IMR-90 (cell line): ENCODE measurements at regions of chr7 and their contacts with region 1.

Region 1: DNA sequence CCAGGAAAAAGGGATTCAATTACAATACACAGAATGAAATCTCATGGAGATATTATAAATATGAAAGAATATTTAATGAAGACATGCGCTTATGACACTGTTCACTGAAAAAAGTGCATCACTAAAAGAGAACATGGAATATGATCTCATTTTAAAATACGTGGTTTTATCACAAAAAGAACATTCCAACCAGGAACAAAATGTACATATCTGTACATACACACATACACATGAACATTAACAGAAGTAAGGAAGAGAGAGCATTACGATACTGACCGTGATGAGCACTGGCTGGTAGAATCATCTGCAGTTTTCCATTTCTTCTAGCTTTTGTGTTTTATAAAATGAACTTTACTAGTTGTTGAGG is 39.4 kb downstream of the IGF2BP3 start:
- DNase-seq: no peak
- ATAC-seq: no peak
- H3K4me3 ChIP-seq: no peak overlapping the region
- H3K27ac ChIP-seq: peak overlapping the region; percentile 30; the same call in 1 of the 2 replicates
- H3K4me1 ChIP-seq: peaks cover 13% of the 10 kb centered on the region
- H3K27me3 ChIP-seq: no peaks in the 10 kb centered on the region
- CTCF ChIP-seq: no peak
- POLR2A ChIP-seq: no peak
- RAD21 ChIP-seq: no peak

Region 2: GRCh38 chr7:23418046-23418445 is 12.8 kb before region 1 on chr7:
- CTCF ChIA-PET with region 1: interaction called, 11 read pairs
- POLR2A ChIA-PET with region 1: no interaction called
- dilution Hi-C with region 1: no loop called
- in situ Hi-C with region 1: no loop called
- intact Hi-C with region 1: no loop called
- DNase-seq: peak; percentile 66
- ATAC-seq: peak; percentile 66
- H3K4me3 ChIP-seq: no peak overlapping the region
- H3K27ac ChIP-seq: no peak overlapping the region
- H3K4me1 ChIP-seq: no peaks in the 10 kb centered on the region; the same call in 1 of the 2 replicates
- H3K27me3 ChIP-seq: no peaks in the 10 kb centered on the region
- CTCF ChIP-seq: 0 out of 2 replicates have a peak, but pooled peaks have one; percentile 1
- POLR2A ChIP-seq: no peak
- RAD21 ChIP-seq: no peak

Region 3: DNA sequence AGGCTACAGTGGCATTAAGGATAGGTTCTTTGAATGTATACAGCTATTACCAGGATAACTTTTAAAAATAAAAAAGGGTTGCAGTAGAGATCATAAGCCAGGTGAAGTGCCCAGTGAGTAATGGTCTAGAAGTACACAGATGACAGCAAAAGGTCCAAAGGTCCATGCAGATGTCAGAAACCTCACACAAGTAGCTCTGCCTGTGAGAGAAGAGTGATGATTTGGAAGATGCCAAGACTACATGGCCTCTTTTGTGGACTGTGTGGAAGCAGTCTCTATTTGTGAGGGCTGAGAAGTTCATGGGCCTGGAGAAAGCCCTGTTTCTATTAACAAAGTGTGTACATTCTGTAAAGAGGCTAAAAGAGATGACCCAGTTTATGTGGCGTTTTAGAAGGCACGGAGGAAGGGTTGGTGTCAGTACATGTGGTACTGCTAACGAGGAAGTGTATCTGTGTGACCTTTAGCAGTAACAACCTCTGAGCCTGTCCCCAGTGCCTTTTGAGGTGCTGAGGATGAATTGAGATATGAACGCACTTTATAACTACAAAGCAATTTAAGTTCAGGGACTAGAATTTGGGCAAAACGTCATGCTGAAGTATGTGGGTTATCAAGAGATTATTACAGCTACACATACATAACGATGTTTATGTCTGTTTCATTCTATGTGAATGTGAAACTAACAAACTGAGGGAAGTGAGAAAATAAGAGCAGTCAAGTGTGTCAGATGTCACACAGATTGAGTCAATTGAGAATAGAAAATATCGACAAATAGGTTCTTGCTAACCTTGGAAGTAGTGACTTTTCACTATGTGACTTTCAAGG is 1686.6 kb after region 1 on chr7:
- CTCF ChIA-PET with region 1: interaction called, 10 read pairs
- POLR2A ChIA-PET with region 1: no interaction called
- dilution Hi-C with region 1: no loop called
- in situ Hi-C with region 1: no loop called
- intact Hi-C with region 1: no loop called
- DNase-seq: peak; percentile 27
- ATAC-seq: no peak
- H3K4me3 ChIP-seq: no peak overlapping the region
- H3K27ac ChIP-seq: no peak overlapping the region
- H3K4me1 ChIP-seq: no peaks in the 10 kb centered on the region
- H3K27me3 ChIP-seq: no peaks in the 10 kb centered on the region
- CTCF ChIP-seq: no peak
- POLR2A ChIP-seq: peak; percentile 30
- RAD21 ChIP-seq: no peak